ENCODE measurements at regions of chr3 and their contacts with region 1.

Region 1: DNA sequence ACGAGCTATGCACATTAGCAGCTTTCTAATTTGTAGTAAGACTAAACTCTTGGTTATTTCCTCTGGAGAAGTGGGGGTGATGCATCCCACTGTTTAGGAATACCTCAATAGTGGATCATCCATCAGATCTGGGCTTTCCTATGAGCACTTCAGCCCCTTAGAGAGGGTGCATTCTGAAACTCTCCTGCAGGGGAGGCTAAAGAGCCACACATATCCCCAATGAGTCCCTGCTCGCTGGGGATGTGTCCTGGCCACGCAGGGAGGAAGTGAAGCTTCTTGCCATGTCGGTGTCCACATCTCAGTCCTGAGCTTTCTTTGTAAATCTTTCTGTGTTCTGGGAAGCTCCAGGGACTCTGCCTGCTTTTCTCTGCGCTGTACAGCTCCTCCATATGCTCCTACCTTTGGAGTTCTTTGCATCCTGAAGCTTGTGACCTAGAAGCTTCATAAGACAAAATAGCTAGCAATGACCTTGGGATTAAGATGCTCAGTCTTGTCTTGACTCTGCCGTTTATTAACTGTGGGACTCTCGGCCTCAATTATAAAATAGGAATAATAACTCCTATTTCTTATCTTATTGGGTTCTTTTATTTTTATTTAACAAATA is 28.3 kb upstream of the MASP1 start:
- DNase-seq: peak; percentile 62 to 75 (median 72)
- ATAC-seq: peak; percentile 85 to 96 (median 94)
- H3K4me3 ChIP-seq: peak overlapping the region in 4 of 12 donors; percentile 34 to 48 (median 41)
- H3K27ac ChIP-seq: peak overlapping the region in 4 of 12 donors; percentile 7 to 49 (median 40)
- H3K4me1 ChIP-seq: peaks cover 0 to 16% (median 10%) of the 10 kb centered on the region in 12 donors
- H3K27me3 ChIP-seq: peaks cover 0 to 9% (median 0%) of the 10 kb centered on the region in 9 donors
- CTCF ChIP-seq: peak; percentile 80 to 97 (median 92)
- POLR2A ChIP-seq: no peak

Region 2: GRCh38 chr3:187016639-187017345 is 303.0 kb before region 1 on chr3:
- intact Hi-C with region 1: no loop called
- DNase-seq: no peak
- ATAC-seq: peak in 3 of 4 donors; percentile 38 to 57 (median 47)
- H3K4me3 ChIP-seq: no peak overlapping the region
- H3K27ac ChIP-seq: peak overlapping the region in 4 of 12 donors; percentile 5 to 42 (median 28)
- H3K4me1 ChIP-seq: peaks cover 0 to 65% (median 51%) of the 10 kb centered on the region in 12 donors
- H3K27me3 ChIP-seq: no peaks in the 10 kb centered on the region
- CTCF ChIP-seq: no peak
- POLR2A ChIP-seq: no peak

Region 3: GRCh38 chr3:187227658-187228258 is 92.0 kb before region 1 on chr3:
- intact Hi-C with region 1: loop called in 7 of 10 experiments (anchors 5 to 10 kb)
- DNase-seq: no peak
- ATAC-seq: no peak
- H3K4me3 ChIP-seq: no peak overlapping the region
- H3K27ac ChIP-seq: no peak overlapping the region
- H3K4me1 ChIP-seq: no peaks in the 10 kb centered on the region
- H3K27me3 ChIP-seq: no peaks in the 10 kb centered on the region
- CTCF ChIP-seq: no peak
- POLR2A ChIP-seq: no peak

Region 4: DNA sequence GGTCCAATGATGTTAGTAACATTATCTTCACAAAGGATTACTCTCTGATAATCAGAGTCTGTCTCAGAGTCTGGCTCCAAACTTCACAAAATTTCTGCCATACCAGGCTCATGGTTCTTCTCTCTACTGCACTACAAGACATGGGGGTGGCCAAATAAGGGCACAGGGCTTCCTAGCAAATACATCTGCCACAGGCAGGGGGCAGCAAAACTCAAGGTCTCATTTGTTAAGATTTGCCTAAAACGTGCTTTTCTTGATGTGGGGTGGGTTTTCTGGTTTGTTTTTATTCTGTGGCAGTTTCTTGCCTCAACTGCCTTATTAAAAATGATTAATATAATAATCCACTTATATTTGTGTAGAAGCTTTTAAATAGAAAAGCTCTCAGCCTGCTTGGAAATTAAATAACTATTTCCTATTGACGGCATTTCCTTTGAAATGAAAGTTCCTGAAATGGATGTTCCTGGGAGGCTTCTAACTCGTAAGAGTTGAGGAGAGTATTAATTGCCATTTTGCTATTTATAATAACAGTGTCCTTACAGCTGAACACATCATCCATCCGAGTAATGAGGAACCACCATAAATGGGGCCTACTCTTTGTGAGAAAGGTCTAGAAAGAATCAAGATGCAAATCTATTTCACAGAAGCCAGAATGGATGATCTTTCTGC is 296.6 kb after region 1 on chr3:
- intact Hi-C with region 1: loop called in 1 of 10 experiments (anchors 5 kb)
- DNase-seq: peak in 2 of 5 donors; percentile 14 to 32
- ATAC-seq: peak in 1 of 4 donors; percentile 54
- H3K4me3 ChIP-seq: no peak overlapping the region
- H3K27ac ChIP-seq: no peak overlapping the region
- H3K4me1 ChIP-seq: peaks cover 0 to 10% (median 0%) of the 10 kb centered on the region in 12 donors
- H3K27me3 ChIP-seq: no peaks in the 10 kb centered on the region
- CTCF ChIP-seq: peak; percentile 46 to 70 (median 62)
- POLR2A ChIP-seq: no peak

Measured in heart left ventricle (tissue), 16 donors.